ENCODE measurements at regions of chr6 and their contacts with region 1.

Region 1: DNA sequence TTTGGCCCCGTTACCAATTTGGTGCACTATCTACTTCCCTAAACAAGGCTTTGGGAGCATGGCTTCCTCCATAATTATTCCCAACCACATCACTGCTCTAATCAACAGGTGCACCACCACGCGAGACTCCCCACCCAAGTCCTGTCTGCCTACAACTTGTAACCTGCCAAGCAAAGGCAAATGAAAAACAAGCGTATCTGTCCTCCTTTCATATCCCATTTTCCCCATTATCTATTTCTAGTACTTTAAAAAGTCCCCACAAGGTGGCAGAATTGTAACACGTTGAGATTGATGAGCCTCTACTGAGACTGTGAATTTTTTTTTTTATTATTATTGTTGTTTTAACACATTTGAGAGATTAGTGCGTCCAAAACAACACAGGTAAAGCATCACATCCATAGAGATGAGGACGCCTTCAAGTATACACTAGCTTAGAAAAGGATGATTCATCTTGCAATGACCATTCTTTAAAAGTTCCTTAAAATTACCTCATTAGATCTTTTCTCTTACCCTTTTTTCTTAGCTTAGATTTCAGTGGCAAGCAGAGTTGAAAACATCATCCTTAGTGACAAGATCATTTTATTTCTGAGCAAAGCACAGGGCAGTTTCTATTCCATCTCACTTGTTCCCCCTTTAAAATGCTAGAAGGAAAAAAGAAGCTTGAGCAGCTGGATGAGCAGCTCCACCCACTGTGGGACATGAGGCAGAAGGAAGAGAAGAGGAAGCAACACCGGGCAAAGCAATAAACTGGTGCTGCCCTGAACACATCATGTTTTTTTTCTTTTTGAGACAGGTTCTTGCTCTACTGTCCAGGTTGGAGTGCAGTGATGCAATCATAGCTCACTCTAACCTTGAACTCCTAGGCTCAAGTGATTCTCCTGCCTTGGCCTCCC is 210.8 kb downstream of the ARHGAP18 start:
- DNase-seq: peak; percentile 31 to 72 (median 40)
- ATAC-seq: peak; percentile 71
- H3K4me3 ChIP-seq: no peak overlapping the region
- H3K27ac ChIP-seq: no peak overlapping the region
- H3K4me1 ChIP-seq: peaks cover 2 to 19% of the 10 kb centered on the region in 2 experiments; a peak in 2 of 5 replicates
- H3K27me3 ChIP-seq: no peaks in the 10 kb centered on the region
- CTCF ChIP-seq: peak; percentile 55 to 83 (median 59); a peak in 4 of 6 replicates
- EP300 ChIP-seq: no peak
- POLR2A ChIP-seq: no peak
- RAD21 ChIP-seq: peak; percentile 90 to 92

Region 2: GRCh38 chr6:129345890-129346289 is 153.3 kb before region 1 on chr6:
- CTCF ChIA-PET with region 1: no interaction called
- POLR2A ChIA-PET with region 1: no interaction called
- in situ Hi-C with region 1: no loop called
- intact Hi-C with region 1: no loop called
- DNase-seq: no peak
- ATAC-seq: no peak
- H3K4me3 ChIP-seq: no peak overlapping the region
- H3K27ac ChIP-seq: no peak overlapping the region
- H3K4me1 ChIP-seq: no peaks in the 10 kb centered on the region
- H3K27me3 ChIP-seq: no peaks in the 10 kb centered on the region
- CTCF ChIP-seq: no peak
- EP300 ChIP-seq: no peak
- POLR2A ChIP-seq: no peak
- RAD21 ChIP-seq: no peak

Region 3: DNA sequence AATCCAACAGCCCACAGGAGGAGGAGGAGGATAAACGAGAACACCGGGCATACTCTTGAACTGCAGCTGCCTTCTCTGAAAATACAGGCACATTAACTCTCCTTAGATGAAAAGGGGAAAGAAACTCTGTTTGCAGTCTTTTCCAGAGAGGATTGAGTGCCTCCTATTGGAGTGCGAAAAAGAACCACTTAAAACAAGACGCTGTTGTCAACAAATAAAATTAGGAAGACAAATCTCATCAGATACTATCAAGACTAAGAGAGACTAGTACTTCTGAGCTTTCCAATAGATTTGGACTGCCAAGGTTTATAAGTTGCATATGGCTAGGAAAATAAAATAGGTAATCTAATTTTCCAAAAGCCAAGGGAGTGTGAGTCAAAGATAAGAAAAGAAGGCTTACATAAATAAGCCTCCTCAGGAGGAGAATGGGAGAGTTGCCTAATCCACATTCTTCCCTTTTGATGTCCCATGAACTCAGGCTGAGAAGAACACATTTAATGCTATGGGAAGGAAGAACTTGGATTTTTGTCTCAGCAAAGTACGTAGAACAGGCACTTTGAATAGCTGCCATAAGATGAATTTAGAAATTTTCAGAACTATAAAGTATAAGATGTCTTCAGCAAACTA is 56.1 kb after region 1 on chr6:
- CTCF ChIA-PET with region 1: no interaction called
- POLR2A ChIA-PET with region 1: no interaction called
- in situ Hi-C with region 1: no loop called
- intact Hi-C with region 1: no loop called
- DNase-seq: no peak
- ATAC-seq: no peak
- H3K4me3 ChIP-seq: no peak overlapping the region
- H3K27ac ChIP-seq: no peak overlapping the region
- H3K4me1 ChIP-seq: no peaks in the 10 kb centered on the region; a peak in 1 of 5 replicates
- H3K27me3 ChIP-seq: no peaks in the 10 kb centered on the region; a peak in 2 of 5 replicates
- CTCF ChIP-seq: peak in 1 of 3 experiments; percentile 13; a peak in 1 of 6 replicates
- EP300 ChIP-seq: no peak
- POLR2A ChIP-seq: no peak
- RAD21 ChIP-seq: 0 out of 4 replicates have a peak, but pooled peaks of 1 of the 2 experiments have one; percentile 18

Region 4: DNA sequence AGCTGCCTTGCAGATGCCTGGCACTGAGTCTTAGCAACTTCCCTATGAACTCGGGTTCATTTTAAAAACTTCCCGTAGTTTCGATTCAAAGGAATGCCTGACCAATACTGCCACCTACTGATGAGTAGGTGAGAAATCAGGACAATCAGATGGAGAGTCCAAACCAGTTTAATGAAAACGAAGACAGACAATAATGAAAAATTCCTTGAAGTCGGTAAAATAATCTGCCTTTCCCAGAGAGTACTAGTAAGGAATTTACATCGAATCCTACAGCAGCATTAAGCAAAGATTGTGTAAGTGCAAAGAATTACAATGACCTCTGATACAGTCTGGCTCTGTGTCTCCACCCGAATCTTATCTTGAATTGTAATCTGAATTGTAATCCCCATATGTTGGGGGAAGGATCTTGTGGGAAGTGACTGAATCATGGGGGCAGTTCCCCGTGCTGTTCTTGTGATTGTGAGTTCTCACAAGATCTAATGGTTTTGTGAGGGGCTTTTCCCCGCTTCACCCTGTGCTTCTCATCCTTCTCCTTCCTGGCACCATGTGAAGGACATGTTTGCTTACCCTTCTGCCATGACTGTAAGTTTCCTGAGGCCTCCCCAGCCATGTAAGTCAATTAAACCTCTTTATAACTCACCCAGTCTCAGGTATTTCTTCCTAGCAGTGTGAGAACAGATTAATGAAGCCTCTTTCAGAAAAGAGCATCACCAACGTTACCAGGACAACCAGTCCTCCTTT is 76.4 kb after region 1 on chr6:
- CTCF ChIA-PET with region 1: interaction called, 13 read pairs
- POLR2A ChIA-PET with region 1: no interaction called
- in situ Hi-C with region 1: no loop called
- intact Hi-C with region 1: loop called (anchors 1 kb)
- DNase-seq: peak in 3 of 4 experiments; percentile 16 to 54 (median 28)
- ATAC-seq: peak; percentile 85
- H3K4me3 ChIP-seq: no peak overlapping the region
- H3K27ac ChIP-seq: no peak overlapping the region
- H3K4me1 ChIP-seq: no peaks in the 10 kb centered on the region
- H3K27me3 ChIP-seq: no peaks in the 10 kb centered on the region
- CTCF ChIP-seq: peak; percentile 53 to 73 (median 71); a peak in 5 of 6 replicates
- EP300 ChIP-seq: no peak
- POLR2A ChIP-seq: no peak
- RAD21 ChIP-seq: peak; percentile 73 to 79

Region 5: DNA sequence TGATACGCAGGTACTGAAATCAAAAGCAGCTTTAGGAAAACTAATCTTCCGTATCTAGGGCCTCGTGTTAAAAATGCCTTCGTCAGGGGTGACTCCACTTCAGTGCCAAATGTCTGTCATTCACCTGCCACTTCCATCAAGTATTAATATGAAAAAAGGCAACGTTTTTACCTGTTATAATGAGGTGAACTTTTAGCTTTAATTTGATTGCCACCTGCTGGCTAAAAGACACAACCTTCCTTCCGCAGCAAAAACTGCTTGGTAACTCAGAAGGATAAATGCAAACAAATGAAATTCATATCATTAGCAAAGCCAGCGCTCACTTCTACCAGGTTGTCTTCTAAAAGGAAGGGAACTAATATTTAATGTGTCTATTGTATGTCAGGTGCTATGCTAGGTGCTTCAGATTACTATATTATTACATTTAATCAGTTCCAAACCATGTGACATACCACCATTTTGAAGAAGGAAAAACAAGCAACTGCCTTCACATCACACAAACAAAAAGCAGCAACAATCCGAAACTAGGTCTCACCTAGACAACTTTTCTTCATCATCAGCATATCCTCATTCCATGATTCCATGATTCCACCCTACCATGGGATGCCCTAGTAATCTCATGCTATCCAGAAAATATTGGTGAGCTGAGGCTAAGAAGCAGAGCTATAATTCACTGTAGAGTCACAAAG is 231.4 kb after region 1 on chr6:
- CTCF ChIA-PET with region 1: no interaction called
- POLR2A ChIA-PET with region 1: no interaction called
- in situ Hi-C with region 1: no loop called
- intact Hi-C with region 1: loop called (anchors 1 kb)
- DNase-seq: peak in 2 of 4 experiments; percentile 18 to 69
- ATAC-seq: peak; percentile 75
- H3K4me3 ChIP-seq: no peak overlapping the region
- H3K27ac ChIP-seq: peak overlapping the region; percentile 79
- H3K4me1 ChIP-seq: peaks cover 10 to 26% of the 10 kb centered on the region in 2 experiments; a peak in 4 of 5 replicates
- H3K27me3 ChIP-seq: no peaks in the 10 kb centered on the region
- CTCF ChIP-seq: peak; percentile 61 to 75 (median 62); a peak in 4 of 6 replicates
- EP300 ChIP-seq: no peak; the same call in 1 of the 2 replicates
- POLR2A ChIP-seq: no peak
- RAD21 ChIP-seq: peak; percentile 89 to 97

Region 6: GRCh38 chr6:129863664-129864063 is 364.5 kb after region 1 on chr6:
- CTCF ChIA-PET with region 1: interaction called, 5 read pairs
- POLR2A ChIA-PET with region 1: interaction called, 3 read pairs
- in situ Hi-C with region 1: no loop called
- intact Hi-C with region 1: loop called (anchors 1 kb)
- DNase-seq: no peak
- ATAC-seq: no peak
- H3K4me3 ChIP-seq: no peak overlapping the region
- H3K27ac ChIP-seq: no peak overlapping the region
- H3K4me1 ChIP-seq: no peaks in the 10 kb centered on the region
- H3K27me3 ChIP-seq: no peaks in the 10 kb centered on the region
- CTCF ChIP-seq: no peak
- EP300 ChIP-seq: no peak
- POLR2A ChIP-seq: no peak
- RAD21 ChIP-seq: no peak

Region 7: DNA sequence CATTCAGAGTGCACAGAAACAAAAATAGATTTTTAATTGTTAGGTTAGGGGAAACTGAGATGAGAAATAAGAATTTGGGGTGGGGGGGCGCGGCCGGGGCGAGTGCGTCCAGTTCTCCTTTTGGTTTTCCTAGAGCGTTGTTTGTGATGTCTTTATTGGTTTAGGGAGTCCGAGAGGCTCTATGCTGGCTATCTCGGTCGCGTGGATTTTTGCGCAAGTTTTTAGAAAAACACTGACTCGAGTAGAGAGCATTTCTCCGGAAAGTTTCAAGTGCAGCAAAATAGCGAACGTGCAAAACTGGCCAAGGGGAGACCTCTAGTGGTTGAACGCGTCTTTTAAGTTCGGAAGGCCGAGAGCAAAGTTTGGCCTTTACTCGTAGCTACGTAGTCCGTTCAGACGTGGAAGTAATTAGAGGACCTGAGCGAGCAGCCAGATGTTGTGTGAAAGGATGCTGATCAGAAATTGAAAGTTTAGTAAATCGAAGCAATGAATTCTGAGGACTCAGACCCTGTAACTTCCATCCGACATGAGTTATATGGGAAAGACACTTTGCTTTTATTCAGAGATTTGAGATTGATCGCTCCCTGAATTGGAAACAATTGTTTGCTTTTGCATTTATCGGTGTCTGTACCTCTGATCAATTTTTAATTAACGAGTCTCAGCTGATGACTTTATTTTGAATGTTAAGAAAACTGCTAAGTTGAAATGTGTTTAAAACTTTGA is 521.9 kb after region 1 on chr6:
- CTCF ChIA-PET with region 1: interaction called, 3 read pairs
- POLR2A ChIA-PET with region 1: no interaction called
- in situ Hi-C with region 1: loop called (anchors 10 kb)
- intact Hi-C with region 1: loop called (anchors 2 kb)
- DNase-seq: peak; percentile 55 to 90 (median 57)
- ATAC-seq: peak; percentile 83
- H3K4me3 ChIP-seq: peak overlapping the region; percentile 60
- H3K27ac ChIP-seq: peak overlapping the region; percentile 62; the same call in 1 of the 3 replicates
- H3K4me1 ChIP-seq: peaks cover 0 to 15% of the 10 kb centered on the region in 2 experiments; a peak in 2 of 5 replicates
- H3K27me3 ChIP-seq: no peaks in the 10 kb centered on the region
- CTCF ChIP-seq: peak; percentile 77 to 92 (median 86)
- EP300 ChIP-seq: no peak
- POLR2A ChIP-seq: no peak
- RAD21 ChIP-seq: peak; percentile 87 to 88

Measured in K562 (cell line).